HCT116 (cell line): ENCODE measurements at regions of chr4 and their contacts with region 1.

Region 1: GRCh38 chr4:107757864-107758476 is 37.9 kb upstream of the PAPSS1 start:
- DNase-seq: no peak
- ATAC-seq: 0 out of 2 replicates have a peak, but pooled peaks have one; percentile 38
- H3K4me3 ChIP-seq: no peak overlapping the region
- H3K27ac ChIP-seq: no peak overlapping the region
- H3K4me1 ChIP-seq: no peaks in the 10 kb centered on the region
- H3K27me3 ChIP-seq: no peaks in the 10 kb centered on the region
- CTCF ChIP-seq: peak; percentile 20 to 67 (median 59); a peak in 5 of 6 replicates
- POLR2A ChIP-seq: no peak
- RAD21 ChIP-seq: peak; percentile 73

Region 2: DNA sequence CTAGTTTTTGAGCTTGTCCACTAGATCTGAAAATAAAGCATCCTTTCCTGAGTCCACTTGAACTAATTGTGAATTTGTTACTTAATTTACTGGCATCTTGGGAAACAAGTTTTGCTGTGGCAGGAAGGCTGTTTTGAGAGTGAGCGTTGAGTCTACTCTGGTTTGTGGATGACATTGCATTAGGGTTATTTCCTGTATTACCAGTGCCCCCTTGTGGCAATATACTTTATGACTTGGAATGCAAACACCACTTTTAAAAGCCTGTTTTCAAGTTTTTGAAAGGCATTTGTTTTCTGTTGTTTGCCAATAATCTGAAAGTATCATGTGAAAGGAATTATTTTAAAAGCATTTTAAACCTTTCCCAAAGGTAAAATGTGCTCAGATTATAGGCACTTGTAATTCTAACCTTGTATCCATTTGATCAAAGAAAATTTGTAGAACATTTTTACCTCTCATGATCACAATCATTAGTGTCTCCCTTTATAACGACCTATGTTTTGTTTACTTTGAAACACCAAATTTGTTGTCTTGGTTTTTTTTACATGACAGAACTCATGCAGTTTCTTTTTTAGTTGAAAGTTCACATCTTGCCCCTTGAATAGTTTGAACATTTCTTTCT is 155.4 kb after region 1 on chr4:
- CTCF ChIA-PET with region 1: interaction called, 23 read pairs
- POLR2A ChIA-PET with region 1: no interaction called
- RAD21 ChIA-PET with region 1: no interaction called
- intact Hi-C with region 1: loop called (anchors 1 kb)
- DNase-seq: peak; percentile 54
- ATAC-seq: peak; percentile 76
- H3K4me3 ChIP-seq: no peak overlapping the region
- H3K27ac ChIP-seq: no peak overlapping the region
- H3K4me1 ChIP-seq: no peaks in the 10 kb centered on the region
- H3K27me3 ChIP-seq: no peaks in the 10 kb centered on the region
- CTCF ChIP-seq: peak; percentile 60 to 87 (median 80); a peak in 5 of 6 replicates
- POLR2A ChIP-seq: no peak
- RAD21 ChIP-seq: peak; percentile 93

Region 3: DNA sequence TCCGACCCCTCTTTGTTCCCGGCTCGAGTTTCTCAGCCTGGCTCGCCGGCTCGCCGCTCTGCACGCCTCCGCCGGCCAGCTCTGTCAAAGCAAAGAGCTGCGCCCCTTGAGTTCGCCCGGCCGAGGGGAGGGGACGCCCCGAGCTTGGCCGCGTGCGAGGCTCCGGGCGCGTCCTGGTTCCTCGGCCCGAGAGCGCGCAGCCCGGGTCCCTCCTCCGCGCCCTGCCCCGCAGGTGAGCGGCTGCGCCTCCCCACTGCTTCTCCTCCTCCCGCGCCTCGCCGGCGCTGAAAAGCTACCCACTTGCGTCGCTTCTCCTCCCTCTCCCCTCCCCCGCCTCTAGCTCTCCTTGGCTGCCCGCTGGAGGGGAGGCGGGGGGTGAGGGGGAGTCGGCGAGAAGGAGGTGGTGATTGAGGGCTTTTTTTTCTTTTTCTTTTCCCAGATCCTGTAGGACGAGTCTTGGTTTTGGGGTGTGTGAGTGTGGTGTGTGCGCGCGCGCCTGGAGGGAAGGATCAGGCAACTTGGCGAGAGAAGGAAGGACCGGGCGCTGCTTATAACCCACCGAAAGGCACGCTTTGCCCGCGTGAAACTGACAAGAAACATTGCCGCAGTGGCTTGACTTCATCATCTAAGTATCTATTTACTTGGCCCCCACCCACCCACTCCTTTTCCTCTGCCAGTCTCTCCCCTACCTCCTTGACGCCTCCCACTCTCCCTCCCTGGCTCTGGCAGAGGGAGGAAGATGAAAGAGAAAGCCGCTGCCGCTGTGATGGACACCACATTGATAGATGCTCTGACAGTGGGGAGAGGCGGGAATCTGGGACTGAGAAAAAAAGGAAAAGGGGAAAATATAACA is 410.9 kb after region 1 on chr4 and contains the start of gene LEF1:
- CTCF ChIA-PET with region 1: no interaction called
- POLR2A ChIA-PET with region 1: no interaction called
- RAD21 ChIA-PET with region 1: no interaction called
- intact Hi-C with region 1: no loop called
- DNase-seq: no peak
- ATAC-seq: no peak
- H3K4me3 ChIP-seq: no peak within 1 kb of the TSS
- H3K27ac ChIP-seq: no peak within 1 kb of the TSS
- H3K4me1 ChIP-seq: no peaks in the 10 kb centered on the region
- H3K27me3 ChIP-seq: peaks cover 15% of the 10 kb centered on the region
- CTCF ChIP-seq: no peak
- POLR2A ChIP-seq: no peak
- RAD21 ChIP-seq: no peak
- total RNA-seq, gene LEF1: 0.79 TPM